ENCODE measurements at regions of chr2 and their contacts with region 1.

Region 1: GRCh38 chr2:190679813-190680591 is 31.1 kb downstream of the NAB1 start:
- DNase-seq: peak; percentile 27
- H3K4me3 Mint-ChIP-seq: peak overlapping the region; percentile 69
- H3K27ac Mint-ChIP-seq: peak overlapping the region; percentile 87
- H3K4me1 Mint-ChIP-seq: peaks cover 53% of the 10 kb centered on the region
- H3K27me3 Mint-ChIP-seq: no peaks in the 10 kb centered on the region

Region 2: GRCh38 chr2:190511104-190511503 is 168.9 kb before region 1 on chr2:
- intact Hi-C with region 1: loop called (anchors 5 kb)
- DNase-seq: no peak
- H3K4me3 Mint-ChIP-seq: no peak overlapping the region
- H3K27ac Mint-ChIP-seq: no peak overlapping the region
- H3K4me1 Mint-ChIP-seq: peaks cover 29% of the 10 kb centered on the region
- H3K27me3 Mint-ChIP-seq: no peaks in the 10 kb centered on the region

Region 3: GRCh38 chr2:190664240-190664639 is 15.8 kb before region 1 on chr2:
- intact Hi-C with region 1: loop called (anchors 1 kb)
- DNase-seq: no peak
- H3K4me3 Mint-ChIP-seq: no peak overlapping the region
- H3K27ac Mint-ChIP-seq: no peak overlapping the region
- H3K4me1 Mint-ChIP-seq: peaks cover 36% of the 10 kb centered on the region
- H3K27me3 Mint-ChIP-seq: no peaks in the 10 kb centered on the region

Region 4: GRCh38 chr2:190744041-190744440 is 64.0 kb after region 1 on chr2:
- intact Hi-C with region 1: no loop called
- DNase-seq: no peak
- H3K4me3 Mint-ChIP-seq: no peak overlapping the region
- H3K27ac Mint-ChIP-seq: no peak overlapping the region
- H3K4me1 Mint-ChIP-seq: peaks cover 15% of the 10 kb centered on the region
- H3K27me3 Mint-ChIP-seq: no peaks in the 10 kb centered on the region

Region 5: GRCh38 chr2:190763901-190764514 is 84.0 kb after region 1 on chr2:
- intact Hi-C with region 1: loop called (anchors 1 kb)
- DNase-seq: no peak
- H3K4me3 Mint-ChIP-seq: peak overlapping the region; percentile 3
- H3K27ac Mint-ChIP-seq: peak overlapping the region; percentile 11
- H3K4me1 Mint-ChIP-seq: peaks cover 44% of the 10 kb centered on the region
- H3K27me3 Mint-ChIP-seq: no peaks in the 10 kb centered on the region